PC-3 (cell line): ENCODE measurements at regions of chr19 and their contacts with region 1.

Region 1: GRCh38 chr19:5031231-5032100 is 62.6 kb downstream of the KDM4B start:
- DNase-seq: peak; percentile 92
- ATAC-seq: peak; percentile 92
- H3K4me3 ChIP-seq: no peak overlapping the region
- H3K27ac ChIP-seq: no peak overlapping the region
- H3K4me1 ChIP-seq: peaks cover 6% of the 10 kb centered on the region
- H3K27me3 ChIP-seq: no peaks in the 10 kb centered on the region
- CTCF ChIP-seq: peak; percentile 99

Region 2: DNA sequence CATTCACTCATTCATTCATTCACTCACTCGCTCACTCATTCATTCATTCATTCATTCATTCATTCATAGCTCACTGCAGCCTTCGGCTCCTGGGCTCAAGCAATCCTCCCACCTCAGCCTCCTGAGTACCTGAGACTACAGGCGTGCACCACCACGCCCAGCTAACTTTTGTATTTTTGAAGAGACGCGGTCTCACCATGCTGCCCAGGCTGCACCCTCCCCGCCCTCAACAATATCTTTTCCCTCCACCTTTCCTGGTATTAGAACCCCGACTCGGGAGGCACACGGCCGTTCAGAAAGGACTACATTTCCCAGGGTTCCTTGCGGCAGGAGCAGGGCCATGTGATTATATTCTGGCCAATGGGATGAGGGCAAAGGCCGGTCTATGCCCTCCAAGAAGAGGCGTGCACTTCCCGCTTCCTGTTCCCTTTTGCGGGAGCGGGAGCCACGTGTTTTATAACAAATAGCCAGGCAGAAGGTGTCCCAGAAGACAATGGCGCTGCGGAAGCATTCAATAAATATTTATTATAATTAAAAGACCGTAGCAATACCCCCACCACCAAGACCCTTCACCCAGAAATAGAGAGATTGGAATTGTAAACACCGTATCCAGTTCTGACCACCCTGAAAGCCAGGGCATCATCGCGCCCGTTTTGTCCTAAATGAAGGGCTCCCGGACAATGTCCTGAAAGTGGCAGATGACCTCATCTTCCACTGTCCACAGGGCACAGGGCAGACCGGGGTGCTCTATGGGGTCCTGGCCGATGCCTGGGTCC is 215.9 kb before region 1 on chr19:
- CTCF ChIA-PET with region 1: no interaction called
- POLR2A ChIA-PET with region 1: no interaction called
- intact Hi-C with region 1: loop called (anchors 2 kb)
- DNase-seq: peak; percentile 93
- ATAC-seq: peak; percentile 59
- H3K4me3 ChIP-seq: peak overlapping the region; percentile 21; the same call in 1 of the 2 replicates
- H3K27ac ChIP-seq: peak overlapping the region; percentile 15; the same call in 1 of the 2 replicates
- H3K4me1 ChIP-seq: peaks cover 16% of the 10 kb centered on the region
- H3K27me3 ChIP-seq: no peaks in the 10 kb centered on the region
- CTCF ChIP-seq: no peak

Region 3: GRCh38 chr19:4873930-4874329 is 157.5 kb before region 1 on chr19:
- CTCF ChIA-PET with region 1: interaction called, 3 read pairs
- POLR2A ChIA-PET with region 1: no interaction called
- intact Hi-C with region 1: loop called (anchors 1 kb)
- DNase-seq: no peak
- ATAC-seq: no peak
- H3K4me3 ChIP-seq: no peak overlapping the region
- H3K27ac ChIP-seq: no peak overlapping the region
- H3K4me1 ChIP-seq: peaks cover 13% of the 10 kb centered on the region
- H3K27me3 ChIP-seq: no peaks in the 10 kb centered on the region
- CTCF ChIP-seq: no peak

Region 4: DNA sequence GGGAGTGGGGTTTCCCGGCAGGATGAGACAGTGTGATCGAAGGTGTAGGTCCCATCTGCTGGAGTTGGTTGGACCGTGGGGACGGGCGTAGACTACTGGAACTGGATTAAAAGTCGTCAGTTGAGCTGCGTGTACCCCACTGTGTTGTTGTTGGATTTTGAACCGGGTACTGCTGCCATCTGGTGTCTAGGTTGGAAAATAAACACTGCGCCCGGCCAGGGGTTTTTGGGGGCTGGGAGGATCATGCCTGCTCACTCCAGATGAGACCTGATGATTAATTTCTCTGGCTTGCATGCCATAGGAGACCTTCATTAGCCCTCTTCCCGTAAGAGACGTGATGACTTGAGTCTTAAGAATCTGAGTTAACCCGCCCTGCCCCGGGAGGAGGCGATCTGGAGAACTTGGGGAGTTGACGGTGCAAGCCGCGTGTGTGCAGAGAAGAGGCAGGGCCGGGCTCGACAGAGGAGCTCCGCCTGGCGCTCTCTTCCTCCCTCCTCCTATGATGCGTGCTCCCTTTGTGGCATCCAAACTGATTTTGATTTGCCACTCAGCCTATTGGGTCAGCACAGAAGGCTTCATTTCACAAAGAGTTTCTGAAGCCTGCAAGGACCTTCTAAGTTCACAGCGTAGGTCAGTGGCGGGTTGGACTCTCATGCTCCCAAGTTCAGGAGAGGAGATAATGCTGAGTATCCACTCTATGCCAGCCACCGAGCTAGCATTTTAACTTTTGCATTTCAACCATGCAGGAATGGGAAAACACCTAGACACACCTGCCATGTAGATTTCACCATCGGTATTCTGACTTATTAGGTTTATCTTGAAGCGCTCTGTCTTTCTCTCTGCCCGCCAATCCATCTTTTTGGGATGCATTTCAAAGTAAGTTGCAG is 119.4 kb before region 1 on chr19:
- CTCF ChIA-PET with region 1: interaction called, 11 read pairs
- POLR2A ChIA-PET with region 1: no interaction called
- intact Hi-C with region 1: loop called (anchors 1 kb)
- DNase-seq: peak; percentile 99
- ATAC-seq: peak; percentile 59
- H3K4me3 ChIP-seq: peak overlapping the region; percentile 78
- H3K27ac ChIP-seq: peak overlapping the region; percentile 81
- H3K4me1 ChIP-seq: peaks cover 59% of the 10 kb centered on the region
- H3K27me3 ChIP-seq: no peaks in the 10 kb centered on the region
- CTCF ChIP-seq: peak; percentile 88

Region 5: GRCh38 chr19:4969772-4970531 is 61.5 kb before region 1 on chr19:
- CTCF ChIA-PET with region 1: interaction called, 7 read pairs
- POLR2A ChIA-PET with region 1: no interaction called
- intact Hi-C with region 1: loop called (anchors 2 kb)
- DNase-seq: peak; percentile 51
- ATAC-seq: no peak
- H3K4me3 ChIP-seq: peak overlapping the region; percentile 84
- H3K27ac ChIP-seq: no peak overlapping the region
- H3K4me1 ChIP-seq: peaks cover 33% of the 10 kb centered on the region
- H3K27me3 ChIP-seq: no peaks in the 10 kb centered on the region
- CTCF ChIP-seq: no peak

Region 6: DNA sequence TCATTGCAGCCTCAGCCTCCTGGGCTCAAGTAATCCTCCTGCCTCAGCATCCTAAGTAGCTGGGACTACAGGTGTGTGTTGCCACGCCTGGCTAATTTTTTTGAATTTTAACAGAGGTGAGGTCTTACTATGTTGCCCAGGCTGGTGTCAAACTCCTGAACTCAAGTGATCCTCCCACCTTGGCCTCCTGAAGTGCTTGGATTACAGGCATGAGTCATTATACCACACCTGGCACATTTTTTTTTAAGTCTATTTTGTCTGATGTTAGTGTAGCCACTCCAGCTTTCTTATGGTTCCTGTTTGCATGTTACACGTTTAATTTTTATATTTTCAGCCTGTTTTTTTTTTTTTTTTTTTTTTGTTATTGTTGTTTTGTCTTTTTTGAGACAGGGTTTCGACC is 37.8 kb before region 1 on chr19:
- CTCF ChIA-PET with region 1: interaction called, 3 read pairs
- POLR2A ChIA-PET with region 1: no interaction called
- intact Hi-C with region 1: loop called (anchors 5 kb)
- DNase-seq: peak; percentile 50
- ATAC-seq: peak; percentile 75
- H3K4me3 ChIP-seq: no peak overlapping the region
- H3K27ac ChIP-seq: no peak overlapping the region
- H3K4me1 ChIP-seq: peaks cover 7% of the 10 kb centered on the region; the same call in 1 of the 2 replicates
- H3K27me3 ChIP-seq: no peaks in the 10 kb centered on the region
- CTCF ChIP-seq: no peak

Region 7: DNA sequence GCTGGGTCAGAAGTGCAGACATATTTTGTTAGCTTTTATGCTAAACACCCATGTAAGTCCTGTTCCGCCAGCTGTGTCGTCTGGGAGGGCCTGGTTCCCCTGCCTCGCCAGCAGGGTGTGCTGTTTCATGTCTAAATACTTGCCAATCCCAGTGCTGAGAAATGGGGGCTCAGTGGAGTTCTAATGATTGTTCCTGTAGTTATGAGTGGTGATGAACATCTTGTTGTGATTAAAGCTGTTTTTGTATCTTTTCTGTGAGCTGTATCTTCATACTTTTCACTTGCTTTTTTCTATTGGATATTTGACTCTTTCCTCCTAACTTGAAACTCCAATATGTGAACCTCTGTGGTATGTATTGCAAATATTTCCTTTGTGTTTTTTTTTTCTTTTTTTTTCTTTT is 29.9 kb before region 1 on chr19:
- CTCF ChIA-PET with region 1: interaction called, 21 read pairs
- POLR2A ChIA-PET with region 1: no interaction called
- intact Hi-C with region 1: loop called (anchors 1 kb)
- DNase-seq: peak; percentile 76
- ATAC-seq: peak; percentile 77
- H3K4me3 ChIP-seq: peak overlapping the region; percentile 17; the same call in 1 of the 2 replicates
- H3K27ac ChIP-seq: peak overlapping the region; percentile 78
- H3K4me1 ChIP-seq: peaks cover 20% of the 10 kb centered on the region
- H3K27me3 ChIP-seq: no peaks in the 10 kb centered on the region
- CTCF ChIP-seq: peak; percentile 97

Region 8: GRCh38 chr19:5052515-5052914 is 21.0 kb after region 1 on chr19:
- CTCF ChIA-PET with region 1: no interaction called
- POLR2A ChIA-PET with region 1: no interaction called
- intact Hi-C with region 1: no loop called
- DNase-seq: peak; percentile 19
- ATAC-seq: no peak
- H3K4me3 ChIP-seq: no peak overlapping the region
- H3K27ac ChIP-seq: no peak overlapping the region
- H3K4me1 ChIP-seq: peaks cover 20% of the 10 kb centered on the region
- H3K27me3 ChIP-seq: no peaks in the 10 kb centered on the region
- CTCF ChIP-seq: peak; percentile 48; the same call in 1 of the 2 replicates

Region 9: DNA sequence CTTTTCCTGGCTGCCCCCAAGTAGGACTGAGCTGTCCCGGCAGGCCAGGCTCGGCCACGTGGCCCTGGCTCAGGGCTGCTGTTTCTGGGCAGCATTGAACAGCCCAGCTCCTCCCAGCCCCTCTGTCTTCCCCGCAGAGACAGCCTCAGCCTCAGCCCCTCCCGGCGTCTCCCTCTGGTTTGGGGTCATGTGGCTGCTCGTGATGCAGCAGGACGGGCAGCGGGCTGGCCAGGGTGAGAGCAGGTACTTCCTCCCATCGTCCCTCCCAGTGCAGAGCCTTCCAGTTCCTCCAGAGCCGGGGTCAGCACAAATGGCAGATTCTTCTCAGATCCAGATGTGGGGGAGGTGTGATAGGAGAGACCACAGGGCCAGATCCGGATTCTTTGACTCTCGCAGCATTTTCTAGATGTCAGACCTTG is 52.1 kb after region 1 on chr19:
- CTCF ChIA-PET with region 1: no interaction called
- POLR2A ChIA-PET with region 1: no interaction called
- intact Hi-C with region 1: no loop called
- DNase-seq: no peak
- ATAC-seq: no peak
- H3K4me3 ChIP-seq: no peak overlapping the region
- H3K27ac ChIP-seq: no peak overlapping the region
- H3K4me1 ChIP-seq: no peaks in the 10 kb centered on the region
- H3K27me3 ChIP-seq: no peaks in the 10 kb centered on the region
- CTCF ChIP-seq: no peak